Activated CD8-positive, alpha-beta T cell treated with anti-CD3 and anti-CD28 coated beads for 36 hours (primary cell): ENCODE measurements at regions of chr16 and their contacts with region 1.

Region 1: DNA sequence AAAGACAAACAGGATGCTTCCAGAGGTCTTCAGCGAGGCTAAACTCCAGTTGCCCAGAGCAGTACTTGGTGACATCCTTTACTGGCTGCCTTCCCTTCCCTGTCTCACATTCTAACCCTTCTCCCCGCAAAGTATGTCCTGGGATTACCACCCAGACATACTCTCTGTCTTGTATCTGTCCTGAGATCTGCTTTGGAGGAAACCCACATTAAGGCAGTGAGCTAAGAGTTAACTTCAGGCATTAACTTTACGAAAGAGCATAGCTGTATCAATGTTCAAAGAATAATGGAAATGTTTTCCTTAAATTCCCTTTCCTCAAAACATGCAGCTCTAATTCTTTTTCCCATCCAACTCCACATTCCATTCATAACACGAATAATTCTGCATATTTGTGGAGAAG is 385.2 kb downstream of the NPIPA8 start:
- DNase-seq: no peak
- ATAC-seq: no peak
- H3K4me3 Mint-ChIP-seq: no peak overlapping the region
- H3K27ac Mint-ChIP-seq: no peak overlapping the region
- H3K4me1 Mint-ChIP-seq: no peaks in the 10 kb centered on the region
- H3K27me3 Mint-ChIP-seq: peaks cover 36% of the 10 kb centered on the region
- CTCF ChIP-seq: no peak

Region 2: GRCh38 chr16:17939122-17939536 is 12.2 kb before region 1 on chr16:
- CTCF ChIA-PET with region 1: no interaction called
- POLR2A ChIA-PET with region 1: no interaction called
- intact Hi-C with region 1: no loop called
- DNase-seq: no peak
- ATAC-seq: peak; percentile 34
- H3K4me3 Mint-ChIP-seq: peak overlapping the region; percentile 31
- H3K27ac Mint-ChIP-seq: no peak overlapping the region
- H3K4me1 Mint-ChIP-seq: peaks cover 12% of the 10 kb centered on the region
- H3K27me3 Mint-ChIP-seq: peaks cover 5% of the 10 kb centered on the region
- CTCF ChIP-seq: no peak

Region 3: GRCh38 chr16:18009612-18010011 is 58.2 kb after region 1 on chr16:
- CTCF ChIA-PET with region 1: no interaction called
- POLR2A ChIA-PET with region 1: no interaction called
- intact Hi-C with region 1: loop called (anchors 10 kb)
- DNase-seq: no peak
- ATAC-seq: no peak
- H3K4me3 Mint-ChIP-seq: no peak overlapping the region
- H3K27ac Mint-ChIP-seq: no peak overlapping the region
- H3K4me1 Mint-ChIP-seq: no peaks in the 10 kb centered on the region
- H3K27me3 Mint-ChIP-seq: peaks cover 2% of the 10 kb centered on the region
- CTCF ChIP-seq: no peak